Activated CD8-positive, alpha-beta T cell treated with anti-CD3 and anti-CD28 coated beads, Interleukin-2, amount 10 ng/mL, durations not matched to agents 7 days and 5 days (primary cell): ENCODE measurements at regions of chr12 and their contacts with region 1.

Region 1: GRCh38 chr12:128794661-128795529 is 28.9 kb downstream of the SLC15A4 start:
- DNase-seq: no peak
- ATAC-seq: no peak
- H3K4me3 Mint-ChIP-seq: no peak overlapping the region
- H3K27ac Mint-ChIP-seq: peak overlapping the region; percentile 73
- H3K4me1 Mint-ChIP-seq: peaks cover 42% of the 10 kb centered on the region
- H3K27me3 Mint-ChIP-seq: no peaks in the 10 kb centered on the region

Region 2: DNA sequence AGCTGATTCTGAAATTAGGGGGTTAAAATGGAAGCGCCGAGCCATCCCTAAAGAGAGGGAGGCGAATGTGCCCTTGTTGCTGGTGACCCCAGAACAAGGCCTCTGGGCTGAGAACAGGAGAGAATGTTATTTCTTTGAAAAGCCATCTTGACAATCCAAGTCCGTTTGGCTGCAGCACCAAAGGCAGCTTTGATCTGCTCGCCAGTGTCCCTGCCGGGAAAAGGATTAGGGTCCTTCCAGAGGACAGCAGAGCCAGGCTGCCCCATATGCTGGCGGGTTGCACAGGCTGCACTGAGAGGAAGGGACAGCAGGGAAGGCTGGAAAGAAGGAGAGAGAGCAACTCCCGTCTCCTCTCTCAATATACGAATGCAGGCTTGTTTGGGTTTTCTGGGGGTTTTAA is 386.2 kb before region 1 on chr12:
- CTCF ChIA-PET with region 1: no interaction called
- POLR2A ChIA-PET with region 1: no interaction called
- DNase-seq: no peak
- ATAC-seq: no peak
- H3K4me3 Mint-ChIP-seq: no peak overlapping the region
- H3K27ac Mint-ChIP-seq: no peak overlapping the region
- H3K4me1 Mint-ChIP-seq: no peaks in the 10 kb centered on the region
- H3K27me3 Mint-ChIP-seq: no peaks in the 10 kb centered on the region

Region 3: DNA sequence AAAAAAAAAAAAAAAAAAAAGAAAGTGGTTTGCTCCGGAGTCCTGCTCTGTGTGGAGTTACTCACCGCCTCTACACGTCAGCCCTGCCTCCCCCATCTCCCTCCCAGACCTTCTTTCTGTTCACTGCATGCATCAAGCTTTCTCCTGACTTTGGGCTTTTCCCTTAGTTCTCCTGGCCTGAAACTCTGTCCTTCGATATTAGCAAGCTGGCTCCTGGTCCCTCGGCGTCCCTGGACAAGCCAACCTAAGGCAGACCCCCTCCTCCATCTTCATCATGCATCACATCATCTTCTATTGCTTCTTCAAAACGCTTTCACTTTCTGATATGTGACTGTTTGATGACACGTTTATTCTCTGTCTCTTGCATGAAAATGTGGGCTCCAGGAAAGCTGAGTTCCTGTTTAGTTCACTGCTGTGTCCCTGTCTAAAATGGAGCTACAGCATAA is 11.7 kb before region 1 on chr12:
- CTCF ChIA-PET with region 1: interaction called, 16 read pairs
- POLR2A ChIA-PET with region 1: no interaction called
- DNase-seq: peak; percentile 36
- ATAC-seq: peak; percentile 81
- H3K4me3 Mint-ChIP-seq: peak overlapping the region; percentile 61
- H3K27ac Mint-ChIP-seq: peak overlapping the region; percentile 92
- H3K4me1 Mint-ChIP-seq: peaks cover 8% of the 10 kb centered on the region
- H3K27me3 Mint-ChIP-seq: no peaks in the 10 kb centered on the region